Colonic mucosa (tissue), 4 donors: ENCODE measurements at regions of chr5 and their contacts with region 1.

Region 1: GRCh38 chr5:132963175-132964104 is at the start of gene AFF4:
- DNase-seq: peak; percentile 97
- H3K4me3 ChIP-seq: peak within 1 kb of the TSS; percentile 82
- H3K27ac ChIP-seq: peak within 1 kb of the TSS; percentile 99
- H3K4me1 ChIP-seq: no peaks in the 10 kb centered on the region
- H3K27me3 ChIP-seq: no peaks in the 10 kb centered on the region
- CTCF ChIP-seq: no peak
- total RNA-seq, gene AFF4: 42.4 to 75.2 TPM

Region 2: GRCh38 chr5:133051580-133052332 is 88.3 kb after region 1 on chr5 and contains the start of gene HSPA4:
- intact Hi-C with region 1: loop called (anchors 5 kb)
- DNase-seq: peak; percentile 100
- H3K4me3 ChIP-seq: peak within 1 kb of the TSS; percentile 76
- H3K27ac ChIP-seq: peak within 1 kb of the TSS; percentile 99
- H3K4me1 ChIP-seq: no peaks in the 10 kb centered on the region
- H3K27me3 ChIP-seq: no peaks in the 10 kb centered on the region
- CTCF ChIP-seq: no peak
- total RNA-seq, gene HSPA4: 91.2 to 132 TPM